Heart left ventricle (tissue), 16 donors: ENCODE measurements at regions of chr10 and their contacts with region 1.

Region 1: DNA sequence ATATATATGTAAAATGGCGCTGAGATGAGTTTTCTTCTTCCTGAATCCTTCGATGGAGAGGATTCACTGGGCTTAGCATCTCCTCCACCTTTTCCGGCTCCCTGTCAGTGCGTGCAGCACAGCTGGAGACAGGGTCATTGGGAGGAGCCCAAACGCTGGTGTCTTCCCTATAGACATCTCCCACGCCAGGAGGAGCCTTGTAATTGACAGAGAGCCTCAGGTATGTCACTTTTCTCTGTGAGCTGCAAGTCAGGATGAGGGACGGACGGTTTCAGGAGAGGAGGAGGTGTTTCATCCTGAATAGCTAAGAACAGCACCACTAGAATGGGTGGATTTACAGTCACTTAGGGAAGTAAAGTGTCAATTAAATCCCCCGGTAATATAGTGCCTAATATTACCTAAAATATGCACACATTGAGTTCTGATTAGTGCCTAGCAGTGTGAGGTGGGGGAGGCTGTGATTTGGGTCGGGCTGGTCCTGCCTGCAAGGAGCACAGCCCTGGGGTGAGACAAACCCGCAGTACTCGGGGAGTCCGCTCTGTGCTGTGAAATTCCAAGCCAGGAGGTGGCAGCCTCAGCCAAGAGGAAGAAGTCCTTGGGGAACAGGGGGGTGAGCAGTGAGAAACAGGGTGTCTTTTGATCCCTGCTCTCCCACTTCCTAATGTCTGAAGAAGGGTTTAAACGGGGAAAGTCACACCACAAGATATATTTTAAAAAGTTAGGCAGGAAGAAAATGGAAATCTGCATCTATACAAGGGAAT is 28.2 kb downstream of the IL15RA start:
- DNase-seq: peak; percentile 60 to 79 (median 68)
- ATAC-seq: peak in 3 of 4 donors; percentile 28 to 50 (median 42)
- H3K4me3 ChIP-seq: no peak overlapping the region
- H3K27ac ChIP-seq: no peak overlapping the region
- H3K4me1 ChIP-seq: peaks cover 0 to 55% (median 30%) of the 10 kb centered on the region in 12 donors
- H3K27me3 ChIP-seq: no peaks in the 10 kb centered on the region
- CTCF ChIP-seq: peak; percentile 7 to 65 (median 40)
- POLR2A ChIP-seq: no peak

Region 2: DNA sequence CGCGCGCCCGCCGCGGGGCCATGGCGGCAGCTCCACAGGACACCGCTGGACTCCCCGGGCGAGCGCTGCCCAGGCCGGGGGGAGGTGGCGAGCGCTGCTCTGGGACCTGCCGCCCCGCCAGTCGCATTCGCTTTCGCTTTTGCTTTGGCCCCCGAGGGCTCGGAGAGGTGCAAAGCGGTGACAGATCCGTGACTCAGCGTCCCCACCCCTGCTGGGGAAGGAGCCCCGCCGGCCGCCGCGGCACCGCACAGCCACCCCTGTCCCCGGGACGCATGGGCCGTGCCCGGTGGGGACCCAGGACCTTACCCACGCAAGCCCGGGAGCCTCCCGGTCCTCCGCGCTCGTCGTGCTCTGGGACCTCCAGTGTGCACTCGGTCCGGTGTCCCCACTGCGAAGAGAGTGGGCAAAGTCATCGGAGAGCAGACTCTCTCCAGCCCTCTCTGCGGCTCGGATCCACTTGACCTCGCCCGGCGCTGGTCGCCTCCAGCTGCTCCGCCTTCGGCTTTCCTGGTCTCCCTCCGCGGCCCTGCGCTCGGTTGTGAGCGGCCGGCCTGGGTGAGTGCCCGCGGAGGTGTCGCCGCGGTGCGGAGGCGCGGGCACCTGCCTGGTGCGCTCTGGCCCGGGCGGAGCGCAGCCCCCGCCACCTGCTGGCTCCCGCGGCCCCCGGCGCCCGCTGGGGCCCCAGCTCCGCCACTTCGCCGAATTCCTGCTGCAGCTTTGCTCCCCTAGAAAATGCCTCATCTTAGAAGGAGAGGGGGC is 28.5 kb after region 1 on chr10 and contains the start of gene IL15RA:
- intact Hi-C with region 1: loop called in 1 of 10 experiments (anchors 2 kb)
- DNase-seq: peak; percentile 71 to 89 (median 80)
- ATAC-seq: peak; percentile 33 to 86 (median 84)
- H3K4me3 ChIP-seq: peak within 1 kb of the TSS; percentile 78 to 99 (median 92)
- H3K27ac ChIP-seq: peak within 1 kb of the TSS; percentile 90 to 97 (median 96)
- H3K4me1 ChIP-seq: peaks cover 0 to 43% (median 7%) of the 10 kb centered on the region in 12 donors
- H3K27me3 ChIP-seq: no peaks in the 10 kb centered on the region
- CTCF ChIP-seq: peak in 5 of 12 donors; percentile 22 to 38 (median 28)
- POLR2A ChIP-seq: peak in 1 of 2 donors; percentile 59
- total RNA-seq, gene IL15RA: 2.2 to 41.1 (median 6.0) TPM

Region 3: DNA sequence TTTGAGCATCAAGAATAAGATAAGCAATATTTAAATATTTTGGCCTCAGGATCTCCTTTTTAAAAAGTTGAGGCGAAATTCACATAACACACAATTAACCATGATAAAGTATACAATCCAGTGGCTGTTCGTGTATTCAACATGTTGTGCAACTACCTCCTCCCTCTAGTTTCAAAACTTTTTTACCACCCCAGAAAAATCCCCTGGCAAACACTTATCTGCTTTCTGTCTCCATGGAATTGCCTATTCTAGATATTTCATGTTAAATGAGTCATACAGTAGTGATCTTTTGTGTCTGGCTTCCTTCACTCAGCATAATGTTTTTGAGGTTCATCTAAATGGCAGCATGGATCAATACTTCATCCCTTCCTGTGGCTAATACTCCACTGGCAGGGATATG is 60.0 kb after region 1 on chr10:
- intact Hi-C with region 1: loop called in 5 of 10 experiments (anchors 10 kb)
- DNase-seq: no peak
- ATAC-seq: peak; percentile 49 to 83 (median 55)
- H3K4me3 ChIP-seq: peak overlapping the region in 9 of 12 donors; percentile 9 to 47 (median 34)
- H3K27ac ChIP-seq: peak overlapping the region in 7 of 12 donors; percentile 6 to 75 (median 34)
- H3K4me1 ChIP-seq: peaks cover 0 to 15% (median 0%) of the 10 kb centered on the region in 12 donors
- H3K27me3 ChIP-seq: peaks cover 0 to 3% (median 0%) of the 10 kb centered on the region in 9 donors
- CTCF ChIP-seq: no peak
- POLR2A ChIP-seq: no peak

Region 4: GRCh38 chr10:6050801-6051445 is 101.7 kb after region 1 on chr10:
- intact Hi-C with region 1: loop called in 1 of 10 experiments (anchors 5 kb)
- DNase-seq: peak; percentile 55 to 73 (median 65)
- ATAC-seq: peak; percentile 55 to 66 (median 61)
- H3K4me3 ChIP-seq: peak overlapping the region in 11 of 12 donors; percentile 2 to 55 (median 41)
- H3K27ac ChIP-seq: peak overlapping the region; percentile 67 to 88 (median 74)
- H3K4me1 ChIP-seq: peaks cover 0 to 53% (median 24%) of the 10 kb centered on the region in 12 donors
- H3K27me3 ChIP-seq: no peaks in the 10 kb centered on the region
- CTCF ChIP-seq: peak; percentile 8 to 59 (median 42)
- POLR2A ChIP-seq: no peak